ENCODE measurements at regions of chrX and their contacts with region 1.

Region 1: GRCh38 chrX:13535376-13536165 is 33.8 kb upstream of the EGFL6 start:
- DNase-seq: peak; percentile 3
- H3K4me3 ChIP-seq: no peak overlapping the region
- CTCF ChIP-seq: no peak

Region 2: GRCh38 chrX:13345037-13345436 is 190.5 kb before region 1 on chrX:
- in situ Hi-C with region 1: no loop called
- DNase-seq: no peak
- H3K4me3 ChIP-seq: no peak overlapping the region
- CTCF ChIP-seq: no peak

Region 3: DNA sequence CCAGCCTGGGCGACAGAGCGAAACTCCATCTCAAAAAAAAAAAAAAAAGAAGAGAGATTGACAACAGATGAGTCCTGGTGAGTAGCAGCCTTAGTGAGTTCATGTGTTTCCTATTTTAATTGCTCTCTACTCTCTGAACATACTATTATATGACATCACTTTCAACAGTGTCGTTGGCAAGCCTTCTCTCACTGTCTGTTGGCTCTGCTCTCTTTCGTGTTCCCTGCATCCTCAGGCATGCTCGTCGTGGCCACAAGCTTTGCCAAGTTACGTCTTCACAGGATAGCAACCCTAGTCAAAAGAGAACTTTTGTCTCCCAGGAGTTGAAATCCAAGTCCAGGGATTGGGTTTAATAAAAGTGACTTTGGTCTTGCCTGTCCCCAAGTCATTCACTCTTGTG is 83.3 kb before region 1 on chrX:
- in situ Hi-C with region 1: no loop called
- DNase-seq: no peak
- H3K4me3 ChIP-seq: no peak overlapping the region
- CTCF ChIP-seq: no peak

Region 4: GRCh38 chrX:13506574-13506973 is 29.0 kb before region 1 on chrX:
- in situ Hi-C with region 1: no loop called
- DNase-seq: peak; percentile 49
- H3K4me3 ChIP-seq: no peak overlapping the region
- CTCF ChIP-seq: peak; percentile 71

Region 5: DNA sequence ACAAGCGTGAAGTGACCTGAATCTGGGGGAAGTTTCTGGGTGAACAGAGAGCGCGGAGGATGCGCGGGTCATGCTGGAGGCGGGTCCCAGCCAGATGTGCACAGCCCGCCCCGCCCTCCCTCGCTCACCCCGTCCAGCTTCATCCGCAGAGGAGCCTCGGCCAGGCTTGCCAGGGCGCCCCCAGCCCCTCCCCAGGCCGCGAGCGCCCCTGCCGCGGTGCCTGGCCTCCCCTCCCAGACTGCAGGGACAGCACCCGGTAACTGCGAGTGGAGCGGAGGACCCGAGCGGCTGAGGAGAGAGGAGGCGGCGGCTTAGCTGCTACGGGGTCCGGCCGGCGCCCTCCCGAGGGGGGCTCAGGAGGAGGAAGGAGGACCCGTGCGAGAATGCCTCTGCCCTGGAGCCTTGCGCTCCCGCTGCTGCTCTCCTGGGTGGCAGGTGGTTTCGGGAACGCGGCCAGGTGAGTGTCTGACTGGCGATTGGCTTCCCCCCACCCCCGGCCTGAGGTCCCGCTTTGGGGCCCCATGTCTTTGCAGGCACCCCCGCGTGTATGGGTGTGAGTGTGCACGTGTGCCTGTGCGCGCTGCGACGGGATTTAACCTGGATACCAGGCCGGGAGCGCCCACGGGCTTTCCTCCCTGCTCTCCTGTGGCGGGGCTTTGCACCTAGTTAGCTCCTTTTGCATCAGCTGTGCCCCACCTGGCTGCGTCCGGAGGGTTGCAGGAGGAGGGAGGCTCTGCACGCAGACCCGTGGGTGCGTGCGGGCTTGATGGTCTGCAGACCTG is 34.1 kb after region 1 on chrX and contains the start of gene EGFL6:
- in situ Hi-C with region 1: loop called (anchors 5 kb)
- DNase-seq: no peak
- H3K4me3 ChIP-seq: no peak within 1 kb of the TSS
- CTCF ChIP-seq: no peak

Measured in astrocyte of the cerebellum (primary cell).